Activated CD8-positive, alpha-beta T cell treated with anti-CD3 and anti-CD28 coated beads for 36 hours (primary cell): ENCODE measurements at regions of chr7 and their contacts with region 1.

Region 1: GRCh38 chr7:116809636-116810266 is 52.6 kb upstream of the CAPZA2 start:
- DNase-seq: peak; percentile 13
- ATAC-seq: no peak
- H3K4me3 Mint-ChIP-seq: no peak overlapping the region
- H3K27ac Mint-ChIP-seq: no peak overlapping the region
- H3K4me1 Mint-ChIP-seq: no peaks in the 10 kb centered on the region
- H3K27me3 Mint-ChIP-seq: peaks cover 5% of the 10 kb centered on the region
- CTCF ChIP-seq: peak; percentile 72

Region 2: GRCh38 chr7:116173051-116174028 is 636.4 kb before region 1 on chr7:
- CTCF ChIA-PET with region 1: no interaction called
- POLR2A ChIA-PET with region 1: no interaction called
- intact Hi-C with region 1: loop called (anchors 1 kb)
- DNase-seq: peak; percentile 27
- ATAC-seq: no peak
- H3K4me3 Mint-ChIP-seq: no peak overlapping the region
- H3K27ac Mint-ChIP-seq: no peak overlapping the region
- H3K4me1 Mint-ChIP-seq: no peaks in the 10 kb centered on the region
- H3K27me3 Mint-ChIP-seq: peaks cover 3% of the 10 kb centered on the region
- CTCF ChIP-seq: peak; percentile 76

Region 3: GRCh38 chr7:116258734-116259133 is 551.0 kb before region 1 on chr7:
- CTCF ChIA-PET with region 1: interaction called, 6 read pairs
- POLR2A ChIA-PET with region 1: no interaction called
- intact Hi-C with region 1: loop called (anchors 10 kb)
- DNase-seq: peak; percentile 44
- ATAC-seq: peak; percentile 42
- H3K4me3 Mint-ChIP-seq: no peak overlapping the region
- H3K27ac Mint-ChIP-seq: no peak overlapping the region
- H3K4me1 Mint-ChIP-seq: peaks cover 6% of the 10 kb centered on the region
- H3K27me3 Mint-ChIP-seq: no peaks in the 10 kb centered on the region
- CTCF ChIP-seq: peak; percentile 81

Region 4: GRCh38 chr7:116571037-116571436 is 238.7 kb before region 1 on chr7:
- CTCF ChIA-PET with region 1: no interaction called
- POLR2A ChIA-PET with region 1: no interaction called
- intact Hi-C with region 1: no loop called
- DNase-seq: no peak
- ATAC-seq: no peak
- H3K4me3 Mint-ChIP-seq: no peak overlapping the region
- H3K27ac Mint-ChIP-seq: no peak overlapping the region
- H3K4me1 Mint-ChIP-seq: no peaks in the 10 kb centered on the region
- H3K27me3 Mint-ChIP-seq: peaks cover 17% of the 10 kb centered on the region
- CTCF ChIP-seq: no peak

Region 5: GRCh38 chr7:116671681-116672595 is 137.8 kb before region 1 on chr7 and contains the start of gene MET:
- CTCF ChIA-PET with region 1: interaction called, 5 read pairs
- POLR2A ChIA-PET with region 1: no interaction called
- intact Hi-C with region 1: loop called (anchors 5 kb)
- DNase-seq: peak; percentile 74
- ATAC-seq: peak; percentile 92
- H3K4me3 Mint-ChIP-seq: peak within 1 kb of the TSS; percentile 70
- H3K27ac Mint-ChIP-seq: no peak within 1 kb of the TSS
- H3K4me1 Mint-ChIP-seq: peaks cover 11% of the 10 kb centered on the region
- H3K27me3 Mint-ChIP-seq: peaks cover 55% of the 10 kb centered on the region
- CTCF ChIP-seq: no peak
- total RNA-seq, gene MET: 0.16 to 0.27 TPM

Region 6: DNA sequence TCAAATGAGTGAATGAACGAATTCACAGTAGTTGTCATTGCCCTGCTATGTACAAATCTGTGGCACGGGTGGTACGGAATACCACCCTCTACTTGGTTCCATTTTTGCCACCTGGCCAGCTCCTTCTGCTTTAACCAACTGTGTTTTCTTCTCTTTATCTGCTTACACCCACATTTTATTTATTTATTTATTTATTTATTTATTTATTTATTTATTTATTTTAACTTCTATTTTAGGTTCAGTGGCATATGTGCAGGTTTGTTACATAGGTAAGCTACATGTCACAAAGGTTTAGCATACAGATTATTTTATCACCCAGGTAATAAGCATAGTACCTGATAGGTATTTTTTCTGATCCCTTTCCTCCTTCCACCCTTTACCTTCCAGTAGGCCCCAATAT is 10.4 kb after region 1 on chr7:
- CTCF ChIA-PET with region 1: no interaction called
- POLR2A ChIA-PET with region 1: no interaction called
- intact Hi-C with region 1: no loop called
- DNase-seq: no peak
- ATAC-seq: no peak
- H3K4me3 Mint-ChIP-seq: no peak overlapping the region
- H3K27ac Mint-ChIP-seq: no peak overlapping the region
- H3K4me1 Mint-ChIP-seq: peaks cover 6% of the 10 kb centered on the region
- H3K27me3 Mint-ChIP-seq: peaks cover 13% of the 10 kb centered on the region
- CTCF ChIP-seq: no peak

Region 7: GRCh38 chr7:117505245-117505644 is 695.5 kb after region 1 on chr7:
- CTCF ChIA-PET with region 1: no interaction called
- POLR2A ChIA-PET with region 1: no interaction called
- intact Hi-C with region 1: no loop called
- DNase-seq: no peak
- ATAC-seq: no peak
- H3K4me3 Mint-ChIP-seq: no peak overlapping the region
- H3K27ac Mint-ChIP-seq: no peak overlapping the region
- H3K4me1 Mint-ChIP-seq: no peaks in the 10 kb centered on the region
- H3K27me3 Mint-ChIP-seq: no peaks in the 10 kb centered on the region
- CTCF ChIP-seq: no peak